ENCODE measurements at regions of chr1 and their contacts with region 1.

Region 1: DNA sequence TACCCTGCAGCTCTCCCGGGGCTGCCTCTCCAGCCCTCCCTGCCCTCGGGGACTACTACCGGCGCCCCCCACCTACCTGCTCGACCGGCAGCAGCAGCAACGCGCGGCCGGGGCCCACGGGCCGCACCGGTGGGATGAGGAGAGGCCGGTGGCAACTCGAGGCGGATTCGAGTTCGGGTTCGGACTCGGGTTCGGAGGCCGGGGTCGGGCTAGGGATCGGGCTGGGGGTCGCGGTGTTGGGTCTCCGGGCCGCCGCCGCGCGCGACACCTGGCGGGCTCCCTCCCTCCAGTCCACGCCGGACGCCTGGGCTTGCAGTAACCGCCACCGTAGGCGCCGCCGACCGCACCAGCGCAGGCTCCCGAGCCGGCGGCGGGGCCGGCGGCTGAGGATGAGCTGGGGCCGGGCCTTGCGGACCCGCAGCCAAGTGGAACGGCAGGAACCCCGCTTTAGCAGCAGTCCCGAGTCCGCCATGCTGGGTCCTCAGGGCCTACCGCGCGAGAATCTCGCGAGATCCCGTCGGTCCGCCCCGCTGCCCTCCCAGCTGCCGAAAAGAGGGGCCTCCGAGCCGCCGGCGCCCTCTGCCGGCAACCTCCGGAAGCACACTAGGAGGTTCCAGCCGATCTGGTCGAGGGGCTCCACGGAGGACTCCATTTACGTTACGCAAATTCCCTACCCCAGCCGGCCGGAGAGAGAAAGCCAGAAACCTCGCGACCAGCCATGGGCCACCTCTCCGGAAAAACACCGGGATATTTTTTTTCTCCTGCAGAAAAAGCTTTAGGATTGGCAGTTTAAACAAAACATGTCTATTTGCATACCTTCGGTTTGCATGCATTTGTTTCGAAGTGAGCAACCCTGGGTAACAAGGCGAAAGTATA is at the start of gene NOL9:
- DNase-seq: peak; percentile 98
- ATAC-seq: peak; percentile 98
- total RNA-seq, gene NOL9: 12.9 TPM

Region 2: GRCh38 chr1:6489799-6490180 is 64.5 kb before region 1 on chr1:
- intact Hi-C with region 1: loop called (anchors 5 kb)
- DNase-seq: peak; percentile 77
- ATAC-seq: peak; percentile 66

Measured in left ventricle myocardium superior (tissue), 1 donor.